ENCODE measurements at regions of chr17 and their contacts with region 1.

Region 1: DNA sequence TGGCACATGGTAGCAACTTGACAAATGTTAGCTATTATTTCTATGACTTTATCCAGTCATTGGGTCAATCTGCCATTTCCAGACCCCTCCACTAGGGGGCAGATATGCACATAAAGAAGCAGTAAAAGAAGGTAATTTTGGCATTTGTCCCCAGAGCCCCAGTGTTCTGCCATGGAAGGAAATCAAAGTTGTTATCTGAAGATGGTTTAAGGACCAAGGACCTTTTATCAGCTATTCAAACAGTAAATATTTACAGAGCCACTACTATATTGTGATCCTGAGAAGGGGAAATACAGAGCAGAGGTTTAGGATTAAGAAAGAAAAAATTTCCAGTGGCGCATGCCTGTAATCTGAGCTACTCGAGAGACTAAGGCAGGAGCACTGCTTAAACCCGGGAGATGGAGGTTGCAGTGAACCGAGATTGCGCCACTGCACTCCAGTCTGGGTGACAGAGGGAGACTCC is 20.0 kb downstream of the TRAF4 start:
- DNase-seq: peak; percentile 58 to 84 (median 76)
- ATAC-seq: peak; percentile 95
- H3K4me3 ChIP-seq: no peak overlapping the region
- H3K4me3 Mint-ChIP-seq: no peak overlapping the region
- H3K27ac ChIP-seq: no peak overlapping the region
- H3K27ac Mint-ChIP-seq: no peak overlapping the region
- H3K4me1 ChIP-seq: no peaks in the 10 kb centered on the region
- H3K4me1 Mint-ChIP-seq: peaks cover 6% of the 10 kb centered on the region
- H3K27me3 ChIP-seq: no peaks in the 10 kb centered on the region
- H3K27me3 Mint-ChIP-seq: no peaks in the 10 kb centered on the region
- CTCF ChIP-seq: peak; percentile 92

Region 2: GRCh38 chr17:28318759-28319660 is 444.8 kb before region 1 on chr17 and contains the start of gene TMEM97:
- CTCF ChIA-PET with region 1: no interaction called
- POLR2A ChIA-PET with region 1: no interaction called
- intact Hi-C with region 1: no loop called
- DNase-seq: peak; percentile 86 to 98 (median 93)
- ATAC-seq: peak; percentile 98
- H3K4me3 ChIP-seq: peak within 1 kb of the TSS; percentile 82
- H3K4me3 Mint-ChIP-seq: peak within 1 kb of the TSS; percentile 84
- H3K27ac ChIP-seq: peak within 1 kb of the TSS; percentile 46 to 52
- H3K27ac Mint-ChIP-seq: peak within 1 kb of the TSS; percentile 49
- H3K4me1 ChIP-seq: peaks cover 19% of the 10 kb centered on the region
- H3K4me1 Mint-ChIP-seq: peaks cover 19% of the 10 kb centered on the region
- H3K27me3 ChIP-seq: no peaks in the 10 kb centered on the region
- H3K27me3 Mint-ChIP-seq: no peaks in the 10 kb centered on the region
- CTCF ChIP-seq: no peak
- total RNA-seq, gene TMEM97: 3.7 to 4.6 TPM

Region 3: DNA sequence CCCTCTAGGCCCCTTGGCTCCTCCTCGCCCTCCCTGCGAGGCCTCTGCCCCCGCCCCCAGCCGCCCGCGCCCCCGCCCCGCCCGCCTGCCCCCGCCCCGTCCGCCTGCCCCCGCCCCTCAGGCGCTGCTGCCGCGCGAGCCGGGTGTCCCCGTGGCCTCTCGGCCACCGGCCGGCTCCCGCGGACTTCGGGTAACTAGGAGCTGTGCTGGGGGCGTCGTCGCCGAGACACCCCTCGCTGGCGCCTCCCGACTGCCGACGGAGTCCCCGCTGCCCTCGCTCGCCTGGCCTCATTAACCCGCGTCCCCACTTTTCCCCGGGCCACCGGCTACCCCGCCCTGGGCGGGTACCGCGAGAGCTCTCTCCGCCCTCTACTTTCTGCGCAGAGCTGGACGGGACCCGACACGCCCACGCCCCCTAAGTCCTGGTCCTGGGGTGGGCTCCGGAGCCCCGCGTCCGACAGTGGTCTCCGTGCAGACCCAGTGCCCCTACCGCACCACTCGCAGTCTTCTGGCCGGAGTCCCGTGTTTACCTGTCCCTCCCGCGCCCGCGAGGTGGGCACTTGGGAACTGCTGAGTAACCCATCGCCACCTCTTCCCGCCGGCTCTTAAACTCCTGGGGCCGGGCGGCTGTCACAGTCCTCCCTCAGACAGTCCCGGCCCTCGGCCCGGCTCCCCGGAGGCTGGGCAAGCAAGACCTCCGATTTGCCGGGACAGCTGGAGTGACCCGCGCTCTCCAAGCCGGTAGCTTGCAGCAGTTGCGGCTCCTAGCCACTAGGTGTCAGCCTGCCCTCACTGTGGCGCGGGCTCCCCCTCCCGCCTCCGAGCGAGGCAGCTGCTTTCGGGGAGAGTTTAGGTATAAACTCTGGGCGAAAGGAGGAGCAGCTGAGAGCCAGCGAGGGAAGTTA is 37.4 kb before region 1 on chr17 and contains the start of gene TLCD1:
- CTCF ChIA-PET with region 1: interaction called, 84 read pairs
- POLR2A ChIA-PET with region 1: interaction called, 11 read pairs
- intact Hi-C with region 1: loop called (anchors 5 kb)
- DNase-seq: peak; percentile 82 to 94 (median 91)
- ATAC-seq: peak; percentile 43
- H3K4me3 ChIP-seq: peak within 1 kb of the TSS; percentile 88 to 92
- H3K4me3 Mint-ChIP-seq: peak within 1 kb of the TSS; percentile 97
- H3K27ac ChIP-seq: peak within 1 kb of the TSS; percentile 43 to 98
- H3K27ac Mint-ChIP-seq: peak within 1 kb of the TSS; percentile 99
- H3K4me1 ChIP-seq: peaks cover 38% of the 10 kb centered on the region
- H3K4me1 Mint-ChIP-seq: peaks cover 59% of the 10 kb centered on the region
- H3K27me3 ChIP-seq: no peaks in the 10 kb centered on the region
- H3K27me3 Mint-ChIP-seq: no peaks in the 10 kb centered on the region
- CTCF ChIP-seq: peak; percentile 99
- total RNA-seq, gene TLCD1: 0.73 to 1.1 TPM

Region 4: GRCh38 chr17:28788100-28788499 is 24.3 kb after region 1 on chr17:
- CTCF ChIA-PET with region 1: interaction called, 16 read pairs
- POLR2A ChIA-PET with region 1: interaction called, 3 read pairs
- intact Hi-C with region 1: no loop called
- DNase-seq: no peak
- ATAC-seq: no peak
- H3K4me3 ChIP-seq: no peak overlapping the region
- H3K4me3 Mint-ChIP-seq: no peak overlapping the region
- H3K27ac ChIP-seq: no peak overlapping the region
- H3K27ac Mint-ChIP-seq: no peak overlapping the region
- H3K4me1 ChIP-seq: peaks cover 5% of the 10 kb centered on the region
- H3K4me1 Mint-ChIP-seq: peaks cover 14% of the 10 kb centered on the region
- H3K27me3 ChIP-seq: no peaks in the 10 kb centered on the region
- H3K27me3 Mint-ChIP-seq: no peaks in the 10 kb centered on the region
- CTCF ChIP-seq: no peak

Region 5: DNA sequence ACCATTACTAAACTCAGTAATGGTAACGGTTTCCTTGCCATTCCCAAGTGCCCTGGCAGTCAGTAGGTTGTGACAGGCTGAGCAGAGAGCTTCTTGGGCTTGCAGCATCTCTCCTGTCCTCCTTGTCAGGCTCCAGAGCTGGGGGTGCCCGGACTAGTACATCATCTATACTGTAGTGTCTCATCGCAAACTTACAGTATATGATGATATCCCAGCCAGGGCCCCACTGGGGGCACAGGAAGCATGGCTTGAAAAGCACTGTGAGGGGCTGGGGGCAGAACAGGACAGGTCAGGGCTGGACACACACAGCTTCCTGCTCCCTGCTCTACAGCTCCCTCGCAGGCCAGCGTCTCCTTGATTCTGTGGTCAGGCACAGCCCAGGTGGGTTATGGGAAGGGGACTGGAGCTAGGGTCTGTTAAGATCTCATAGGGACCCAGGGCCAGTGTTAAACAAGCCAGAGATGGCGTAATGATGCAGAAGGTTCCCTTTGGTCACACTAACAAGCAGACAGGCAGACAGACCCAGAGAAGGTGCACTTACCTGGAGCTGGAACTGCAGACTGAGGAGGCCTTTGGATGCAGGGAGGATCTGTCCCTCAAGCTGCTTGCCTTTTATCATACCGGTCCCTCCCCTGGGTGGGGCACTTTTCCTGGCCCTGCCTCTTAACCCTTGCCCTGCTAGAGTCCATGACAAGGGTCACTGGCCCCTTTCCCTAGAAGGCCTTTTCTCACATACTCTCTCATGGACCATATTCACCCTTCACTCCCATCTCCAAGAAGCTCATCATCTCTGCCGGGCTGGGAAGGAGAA is 97.8 kb after region 1 on chr17:
- CTCF ChIA-PET with region 1: interaction called, 10 read pairs
- POLR2A ChIA-PET with region 1: no interaction called
- intact Hi-C with region 1: no loop called
- DNase-seq: no peak
- ATAC-seq: no peak
- H3K4me3 ChIP-seq: no peak overlapping the region
- H3K4me3 Mint-ChIP-seq: no peak overlapping the region
- H3K27ac ChIP-seq: no peak overlapping the region
- H3K27ac Mint-ChIP-seq: no peak overlapping the region
- H3K4me1 ChIP-seq: no peaks in the 10 kb centered on the region
- H3K4me1 Mint-ChIP-seq: no peaks in the 10 kb centered on the region
- H3K27me3 ChIP-seq: no peaks in the 10 kb centered on the region
- H3K27me3 Mint-ChIP-seq: no peaks in the 10 kb centered on the region
- CTCF ChIP-seq: no peak

Region 6: GRCh38 chr17:28896884-28897768 is 133.3 kb after region 1 on chr17 and contains the start of gene FLOT2:
- CTCF ChIA-PET with region 1: interaction called, 95 read pairs
- POLR2A ChIA-PET with region 1: interaction called, 4 read pairs
- intact Hi-C with region 1: loop called in 1 of 2 experiments (anchors 5 kb)
- DNase-seq: peak; percentile 37 to 86 (median 75)
- ATAC-seq: peak; percentile 78
- H3K4me3 ChIP-seq: peak within 1 kb of the TSS; percentile 77 to 81
- H3K4me3 Mint-ChIP-seq: peak within 1 kb of the TSS; percentile 96
- H3K27ac ChIP-seq: peak within 1 kb of the TSS; percentile 85 to 88
- H3K27ac Mint-ChIP-seq: peak within 1 kb of the TSS; percentile 96
- H3K4me1 ChIP-seq: peaks cover 63% of the 10 kb centered on the region
- H3K4me1 Mint-ChIP-seq: peaks cover 62% of the 10 kb centered on the region
- H3K27me3 ChIP-seq: no peaks in the 10 kb centered on the region
- H3K27me3 Mint-ChIP-seq: no peaks in the 10 kb centered on the region
- CTCF ChIP-seq: peak; percentile 43
- total RNA-seq, gene FLOT2: 69.7 to 71.6 TPM

Region 7: GRCh38 chr17:28916302-28916934 is 152.6 kb after region 1 on chr17:
- CTCF ChIA-PET with region 1: interaction called, 89 read pairs
- POLR2A ChIA-PET with region 1: no interaction called
- intact Hi-C with region 1: loop called (anchors 1 to 2 kb)
- DNase-seq: peak in 6 of 9 experiments; percentile 44 to 67 (median 54)
- ATAC-seq: peak; percentile 75
- H3K4me3 ChIP-seq: no peak overlapping the region
- H3K4me3 Mint-ChIP-seq: no peak overlapping the region
- H3K27ac ChIP-seq: no peak overlapping the region
- H3K27ac Mint-ChIP-seq: peak overlapping the region; percentile 65
- H3K4me1 ChIP-seq: no peaks in the 10 kb centered on the region
- H3K4me1 Mint-ChIP-seq: peaks cover 1% of the 10 kb centered on the region
- H3K27me3 ChIP-seq: no peaks in the 10 kb centered on the region
- H3K27me3 Mint-ChIP-seq: no peaks in the 10 kb centered on the region
- CTCF ChIP-seq: peak; percentile 74

Region 8: DNA sequence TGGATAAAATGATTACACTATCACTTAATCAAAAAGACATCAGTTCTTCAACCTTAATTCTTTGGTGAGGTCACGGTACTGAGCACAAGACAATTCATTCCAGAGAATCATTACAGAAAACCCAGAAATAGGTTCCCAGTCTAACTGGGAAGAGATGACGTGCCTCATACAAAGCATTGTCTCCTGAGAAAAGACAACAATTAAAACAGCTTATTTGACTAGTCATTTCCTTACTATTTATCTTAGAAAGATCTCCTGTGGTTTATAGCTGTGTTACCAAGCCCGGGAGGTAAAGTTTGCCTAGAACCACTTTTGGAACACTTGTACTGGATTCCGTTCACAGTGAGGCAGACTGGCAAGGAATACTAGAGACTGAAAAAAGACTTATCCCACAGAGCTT is 182.4 kb after region 1 on chr17:
- CTCF ChIA-PET with region 1: interaction called, 40 read pairs
- POLR2A ChIA-PET with region 1: interaction called, 3 read pairs
- intact Hi-C with region 1: no loop called
- DNase-seq: no peak
- ATAC-seq: no peak
- H3K4me3 ChIP-seq: no peak overlapping the region
- H3K4me3 Mint-ChIP-seq: peak overlapping the region; percentile 15
- H3K27ac ChIP-seq: peak overlapping the region in 1 of 2 experiments; percentile 88
- H3K27ac Mint-ChIP-seq: peak overlapping the region; percentile 73
- H3K4me1 ChIP-seq: peaks cover 54% of the 10 kb centered on the region
- H3K4me1 Mint-ChIP-seq: peaks cover 65% of the 10 kb centered on the region
- H3K27me3 ChIP-seq: no peaks in the 10 kb centered on the region
- H3K27me3 Mint-ChIP-seq: no peaks in the 10 kb centered on the region
- CTCF ChIP-seq: no peak

Region 9: GRCh38 chr17:29131814-29132682 is 368.2 kb after region 1 on chr17:
- CTCF ChIA-PET with region 1: no interaction called
- POLR2A ChIA-PET with region 1: no interaction called
- intact Hi-C with region 1: no loop called
- DNase-seq: no peak
- ATAC-seq: no peak
- H3K4me3 ChIP-seq: no peak overlapping the region
- H3K4me3 Mint-ChIP-seq: no peak overlapping the region
- H3K27ac ChIP-seq: no peak overlapping the region
- H3K27ac Mint-ChIP-seq: no peak overlapping the region
- H3K4me1 ChIP-seq: no peaks in the 10 kb centered on the region
- H3K4me1 Mint-ChIP-seq: peaks cover 28% of the 10 kb centered on the region
- H3K27me3 ChIP-seq: no peaks in the 10 kb centered on the region
- H3K27me3 Mint-ChIP-seq: no peaks in the 10 kb centered on the region
- CTCF ChIP-seq: no peak

Region 10: GRCh38 chr17:29233301-29233700 is 469.5 kb after region 1 on chr17:
- CTCF ChIA-PET with region 1: no interaction called
- POLR2A ChIA-PET with region 1: no interaction called
- intact Hi-C with region 1: no loop called
- DNase-seq: no peak
- ATAC-seq: no peak
- H3K4me3 ChIP-seq: no peak overlapping the region
- H3K4me3 Mint-ChIP-seq: no peak overlapping the region
- H3K27ac ChIP-seq: no peak overlapping the region
- H3K27ac Mint-ChIP-seq: no peak overlapping the region
- H3K4me1 ChIP-seq: no peaks in the 10 kb centered on the region
- H3K4me1 Mint-ChIP-seq: no peaks in the 10 kb centered on the region
- H3K27me3 ChIP-seq: no peaks in the 10 kb centered on the region
- H3K27me3 Mint-ChIP-seq: peaks cover 2% of the 10 kb centered on the region
- CTCF ChIP-seq: no peak

Region 11: GRCh38 chr17:30413109-30413508 is 1649.3 kb after region 1 on chr17:
- CTCF ChIA-PET with region 1: no interaction called
- POLR2A ChIA-PET with region 1: no interaction called
- intact Hi-C with region 1: no loop called
- DNase-seq: no peak
- ATAC-seq: no peak
- H3K4me3 ChIP-seq: no peak overlapping the region
- H3K4me3 Mint-ChIP-seq: no peak overlapping the region
- H3K27ac ChIP-seq: no peak overlapping the region
- H3K27ac Mint-ChIP-seq: no peak overlapping the region
- H3K4me1 ChIP-seq: no peaks in the 10 kb centered on the region
- H3K4me1 Mint-ChIP-seq: peaks cover 27% of the 10 kb centered on the region
- H3K27me3 ChIP-seq: no peaks in the 10 kb centered on the region
- H3K27me3 Mint-ChIP-seq: no peaks in the 10 kb centered on the region
- CTCF ChIP-seq: no peak